OCI-LY7 (cell line): ENCODE measurements at regions of chr16 and their contacts with region 1.

Region 1: DNA sequence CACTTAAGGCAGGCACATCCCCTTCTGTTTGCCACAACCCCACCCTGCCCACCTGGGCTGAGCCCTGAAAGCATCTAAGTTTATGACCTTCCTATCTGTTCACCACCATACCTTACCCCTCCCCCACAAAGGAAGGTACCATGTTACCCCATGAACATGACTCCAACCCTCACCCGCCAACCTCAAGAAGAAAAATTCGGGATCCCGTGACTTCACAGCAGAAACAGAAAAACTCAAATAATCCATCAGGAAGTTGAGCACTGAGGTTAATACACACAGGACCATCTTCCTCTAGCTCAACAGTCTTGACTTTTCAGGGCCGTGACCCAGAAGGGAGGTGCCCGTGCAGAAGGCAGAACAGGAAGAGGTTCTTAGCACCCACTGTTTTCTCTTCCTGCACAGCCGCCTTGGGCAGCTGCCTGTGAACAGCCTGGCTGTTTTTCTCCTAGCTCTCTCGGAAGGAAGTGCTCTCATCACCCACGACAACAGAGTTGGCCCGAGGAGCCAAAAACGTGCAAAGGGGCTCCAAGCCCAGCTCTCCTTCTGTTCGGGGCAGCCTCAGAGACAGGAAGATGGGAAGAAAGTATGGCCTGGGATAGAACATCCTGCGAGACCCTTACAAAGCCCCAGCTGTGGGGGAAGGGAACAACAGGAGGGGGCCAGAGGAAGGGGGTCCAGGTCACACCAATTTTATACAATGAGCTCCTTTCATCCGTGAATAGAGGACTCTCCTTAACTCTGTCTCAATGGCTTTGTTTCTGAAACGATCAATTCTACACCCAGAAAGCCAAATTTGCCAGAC is 101.1 kb downstream of the XYLT1 start:
- DNase-seq: peak; percentile 92
- H3K4me3 ChIP-seq: peak overlapping the region; percentile 61
- H3K27ac ChIP-seq: peak overlapping the region; percentile 94
- H3K4me1 ChIP-seq: peaks cover 98% of the 10 kb centered on the region
- CTCF ChIP-seq: no peak; the same call in 1 of the 2 replicates

Region 2: GRCh38 chr16:17038415-17038814 is 331.2 kb before region 1 on chr16:
- CTCF ChIA-PET with region 1: no interaction called
- POLR2A ChIA-PET with region 1: no interaction called
- intact Hi-C with region 1: no loop called
- DNase-seq: no peak
- H3K4me3 ChIP-seq: no peak overlapping the region
- H3K27ac ChIP-seq: no peak overlapping the region
- H3K4me1 ChIP-seq: no peaks in the 10 kb centered on the region
- CTCF ChIP-seq: no peak

Region 3: GRCh38 chr16:17283016-17283415 is 86.6 kb before region 1 on chr16:
- CTCF ChIA-PET with region 1: interaction called, 11 read pairs
- POLR2A ChIA-PET with region 1: interaction called, 6 read pairs
- intact Hi-C with region 1: loop called (anchors 5 kb)
- DNase-seq: no peak
- H3K4me3 ChIP-seq: peak overlapping the region; percentile 48
- H3K27ac ChIP-seq: peak overlapping the region; percentile 60
- H3K4me1 ChIP-seq: peaks cover 83% of the 10 kb centered on the region
- CTCF ChIP-seq: no peak

Region 4: GRCh38 chr16:17339764-17340541 is 29.7 kb before region 1 on chr16:
- CTCF ChIA-PET with region 1: no interaction called
- POLR2A ChIA-PET with region 1: no interaction called
- intact Hi-C with region 1: no loop called
- DNase-seq: no peak
- H3K4me3 ChIP-seq: no peak overlapping the region
- H3K27ac ChIP-seq: no peak overlapping the region
- H3K4me1 ChIP-seq: peaks cover 31% of the 10 kb centered on the region
- CTCF ChIP-seq: no peak

Region 5: DNA sequence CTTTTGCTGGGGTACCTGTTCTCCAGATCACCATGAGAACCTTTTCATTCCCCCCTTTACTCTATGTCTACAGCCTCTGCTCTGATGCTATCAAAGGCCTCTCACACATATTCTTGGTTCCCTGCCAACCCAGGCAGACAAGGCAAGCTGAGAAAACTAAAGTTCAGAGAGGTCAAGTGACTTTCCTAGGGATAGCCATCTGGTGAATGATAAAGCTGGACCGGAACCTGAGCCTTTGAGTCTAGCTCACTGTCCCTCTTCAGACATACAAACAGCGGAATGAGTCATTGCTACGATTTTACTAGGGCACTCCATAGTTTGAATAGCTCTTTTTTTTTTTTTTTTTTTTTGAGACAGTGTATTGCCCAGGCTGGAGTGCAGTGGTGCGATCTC is 27.9 kb after region 1 on chr16:
- CTCF ChIA-PET with region 1: no interaction called
- POLR2A ChIA-PET with region 1: no interaction called
- intact Hi-C with region 1: no loop called
- DNase-seq: no peak
- H3K4me3 ChIP-seq: no peak overlapping the region
- H3K27ac ChIP-seq: no peak overlapping the region
- H3K4me1 ChIP-seq: peaks cover 11% of the 10 kb centered on the region
- CTCF ChIP-seq: no peak

Region 6: DNA sequence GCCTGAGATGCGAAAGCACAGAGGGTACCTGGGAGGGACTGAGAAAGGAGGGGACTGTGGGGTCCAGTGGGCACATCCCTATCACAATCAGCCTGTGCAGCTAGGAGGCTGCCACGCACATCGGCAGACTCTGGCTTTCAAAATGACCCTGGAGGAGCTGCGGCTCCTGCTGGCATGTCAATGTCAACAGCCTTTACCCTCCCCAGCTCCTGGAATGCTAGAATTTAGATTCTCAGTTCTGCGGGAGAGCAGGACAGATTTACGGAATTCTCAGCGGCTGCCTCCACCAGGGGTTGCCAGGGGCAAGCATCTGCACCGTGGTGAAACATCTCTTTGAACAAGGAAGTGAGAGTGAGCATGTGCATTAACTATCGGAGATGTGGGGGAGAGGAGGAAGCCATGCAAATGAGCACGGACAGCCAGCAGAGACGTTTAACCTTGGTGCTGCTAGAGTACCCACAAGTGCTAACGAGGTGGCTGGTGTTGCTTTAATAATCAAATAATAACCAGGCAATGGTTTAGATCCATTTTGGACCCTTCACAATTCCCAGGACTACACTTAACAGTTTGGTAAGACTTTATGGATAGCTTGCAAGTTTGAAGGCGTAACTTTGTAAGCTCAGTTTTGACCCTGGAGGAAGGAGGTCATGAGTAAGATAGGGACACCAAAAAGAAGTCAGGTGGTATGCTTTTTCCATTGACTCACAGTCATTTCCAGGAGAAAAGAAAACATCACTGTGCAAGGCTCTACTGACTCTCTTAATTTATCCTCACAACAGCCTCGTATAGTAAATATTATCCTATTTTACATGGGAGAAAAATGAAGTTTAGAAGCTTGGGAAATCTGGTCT is 47.1 kb after region 1 on chr16:
- CTCF ChIA-PET with region 1: no interaction called
- POLR2A ChIA-PET with region 1: interaction called, 12 read pairs
- intact Hi-C with region 1: loop called (anchors 1 kb)
- DNase-seq: peak; percentile 92
- H3K4me3 ChIP-seq: peak overlapping the region; percentile 64
- H3K27ac ChIP-seq: peak overlapping the region; percentile 87
- H3K4me1 ChIP-seq: peaks cover 50% of the 10 kb centered on the region
- CTCF ChIP-seq: peak; percentile 70

Region 7: DNA sequence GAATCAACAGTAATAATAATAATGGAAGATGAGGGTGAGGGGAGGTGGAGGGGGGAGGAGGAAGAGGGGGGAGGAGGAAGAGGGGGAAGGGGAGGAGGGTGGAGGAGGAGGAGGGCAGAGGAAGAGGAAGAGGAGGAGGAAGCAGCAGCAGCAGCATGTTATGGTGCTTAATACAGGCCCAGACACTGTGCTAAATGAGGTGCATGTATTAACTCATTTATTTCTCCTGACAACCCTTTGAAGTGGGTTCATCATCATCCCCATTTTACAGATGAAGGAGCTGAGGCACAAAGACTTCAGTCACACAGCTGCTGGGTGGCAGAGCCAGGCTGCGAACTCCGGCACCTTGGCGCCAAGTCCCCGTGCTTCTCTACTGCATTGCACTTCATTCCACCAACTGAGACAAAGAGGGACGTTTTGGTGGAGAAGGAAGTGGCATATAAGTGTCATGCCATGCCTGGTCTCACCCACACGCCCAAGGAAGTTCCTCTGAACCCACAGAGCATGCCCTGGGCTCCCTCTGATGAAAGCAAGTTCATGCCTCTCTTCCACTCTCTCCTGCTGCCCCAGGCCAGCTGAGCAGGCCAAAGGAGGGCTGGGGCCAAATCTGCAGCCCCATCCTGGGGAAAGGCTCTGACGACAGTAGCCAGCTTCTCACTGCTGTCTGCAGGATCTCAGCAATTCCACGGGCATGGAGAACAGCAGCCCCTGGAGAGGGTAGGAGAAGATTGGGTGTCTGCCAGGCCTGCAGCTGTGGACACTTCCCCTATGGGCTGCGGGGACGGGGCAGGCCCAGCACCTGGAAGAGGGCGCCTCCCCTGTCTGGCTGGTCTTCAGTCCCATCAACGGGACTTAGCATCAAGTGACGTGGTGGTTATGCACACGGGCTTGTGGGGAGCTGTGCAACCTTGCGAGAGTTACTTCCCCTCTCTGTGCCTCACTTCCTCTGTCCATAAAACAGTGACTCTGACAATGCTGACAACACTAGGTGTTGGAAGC is 79.3 kb after region 1 on chr16:
- CTCF ChIA-PET with region 1: no interaction called
- POLR2A ChIA-PET with region 1: interaction called, 4 read pairs
- intact Hi-C with region 1: loop called (anchors 5 kb)
- DNase-seq: peak; percentile 51
- H3K4me3 ChIP-seq: peak overlapping the region; percentile 29
- H3K27ac ChIP-seq: peak overlapping the region; percentile 70
- H3K4me1 ChIP-seq: peaks cover 40% of the 10 kb centered on the region
- CTCF ChIP-seq: 0 out of 2 replicates have a peak, but pooled peaks have one; percentile 21

Region 8: DNA sequence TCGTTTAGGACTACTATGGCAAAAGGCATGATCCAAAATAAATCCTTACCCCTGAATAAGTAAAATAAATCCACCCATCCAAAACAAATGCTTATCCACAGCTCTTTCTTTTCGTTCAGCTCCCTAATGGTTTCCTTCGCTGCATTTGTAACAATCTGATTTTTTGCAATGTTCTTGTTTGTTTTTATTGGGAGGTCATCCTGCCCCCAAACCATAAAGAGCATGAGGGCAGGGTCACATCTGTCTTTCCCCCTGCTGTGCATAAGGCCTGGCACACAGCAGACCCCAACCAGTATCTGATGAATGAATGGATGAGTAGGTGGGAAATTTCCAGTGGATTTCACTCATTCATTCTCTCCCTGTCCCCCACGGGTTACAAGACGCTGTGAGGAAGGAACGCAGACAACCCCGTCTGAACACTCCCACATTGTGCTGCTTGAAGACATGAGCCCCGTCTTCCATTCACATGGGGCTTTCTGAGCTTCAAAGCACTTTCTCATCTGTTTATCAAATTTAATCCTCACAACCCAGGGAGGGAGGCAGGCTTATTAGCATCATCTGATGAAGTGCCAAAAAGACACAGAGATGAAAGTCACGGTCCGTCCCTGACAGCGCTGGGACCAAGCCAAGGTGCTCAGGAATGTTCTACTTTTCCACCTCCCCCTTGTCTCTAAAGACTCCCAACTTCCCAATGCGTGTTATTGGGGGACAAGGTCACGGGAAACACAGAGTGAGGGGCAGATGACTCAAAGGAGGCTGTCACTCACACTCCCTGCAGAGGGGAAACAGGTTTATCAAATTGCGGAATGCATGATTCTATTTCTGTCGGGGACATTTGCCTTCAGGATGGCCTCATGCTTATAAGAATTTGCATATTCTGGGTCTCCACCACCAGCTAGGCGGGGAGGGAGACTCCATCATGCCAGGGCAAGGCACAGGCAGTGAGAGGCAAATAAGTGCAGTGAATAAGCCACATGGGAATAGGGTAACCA is 90.2 kb after region 1 on chr16:
- CTCF ChIA-PET with region 1: interaction called, 5 read pairs
- POLR2A ChIA-PET with region 1: interaction called, 6 read pairs
- intact Hi-C with region 1: loop called (anchors 1 kb)
- DNase-seq: peak; percentile 92
- H3K4me3 ChIP-seq: peak overlapping the region; percentile 59
- H3K27ac ChIP-seq: peak overlapping the region; percentile 94
- H3K4me1 ChIP-seq: peaks cover 74% of the 10 kb centered on the region
- CTCF ChIP-seq: no peak

Region 9: GRCh38 chr16:17467923-17468540 is 98.4 kb after region 1 on chr16:
- CTCF ChIA-PET with region 1: interaction called, 5 read pairs
- POLR2A ChIA-PET with region 1: interaction called, 6 read pairs
- intact Hi-C with region 1: loop called (anchors 2 kb)
- DNase-seq: peak; percentile 63
- H3K4me3 ChIP-seq: peak overlapping the region; percentile 94
- H3K27ac ChIP-seq: peak overlapping the region; percentile 70
- H3K4me1 ChIP-seq: peaks cover 55% of the 10 kb centered on the region
- CTCF ChIP-seq: peak; percentile 89

Region 10: GRCh38 chr16:17510567-17510966 is 140.9 kb after region 1 on chr16:
- CTCF ChIA-PET with region 1: no interaction called
- POLR2A ChIA-PET with region 1: no interaction called
- intact Hi-C with region 1: no loop called
- DNase-seq: no peak
- H3K4me3 ChIP-seq: no peak overlapping the region
- H3K27ac ChIP-seq: no peak overlapping the region
- H3K4me1 ChIP-seq: no peaks in the 10 kb centered on the region
- CTCF ChIP-seq: no peak